ENCODE measurements at regions of chr2 and their contacts with region 1.

Region 1: GRCh38 chr2:42663106-42663780 is 94.8 kb downstream of the MTA3 start:
- DNase-seq: peak; percentile 70
- CTCF ChIP-seq: peak; percentile 95

Region 2: DNA sequence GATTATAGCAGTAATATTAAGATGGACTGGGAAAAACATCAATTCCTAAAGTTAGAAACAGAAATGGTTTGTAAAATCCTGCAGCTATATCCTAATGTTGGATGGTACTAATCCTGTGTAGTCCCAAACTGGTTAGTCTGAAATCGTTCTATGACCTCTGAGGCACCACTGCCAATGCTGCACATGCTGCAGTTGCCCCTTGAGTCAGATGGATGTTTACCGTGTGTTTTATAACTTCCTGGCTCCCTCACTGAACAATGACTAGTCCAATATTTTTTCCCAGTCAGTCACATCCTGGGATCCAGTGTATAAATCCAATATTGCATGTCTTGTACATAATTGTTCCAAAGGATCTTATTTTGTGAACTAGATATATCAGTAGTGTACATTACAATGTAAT is 842.1 kb before region 1 on chr2:
- in situ Hi-C with region 1: no loop called
- DNase-seq: no peak
- CTCF ChIP-seq: no peak

Region 3: GRCh38 chr2:41853427-41854216 is 809.6 kb before region 1 on chr2:
- in situ Hi-C with region 1: no loop called
- DNase-seq: peak; percentile 23
- CTCF ChIP-seq: peak; percentile 45

Region 4: DNA sequence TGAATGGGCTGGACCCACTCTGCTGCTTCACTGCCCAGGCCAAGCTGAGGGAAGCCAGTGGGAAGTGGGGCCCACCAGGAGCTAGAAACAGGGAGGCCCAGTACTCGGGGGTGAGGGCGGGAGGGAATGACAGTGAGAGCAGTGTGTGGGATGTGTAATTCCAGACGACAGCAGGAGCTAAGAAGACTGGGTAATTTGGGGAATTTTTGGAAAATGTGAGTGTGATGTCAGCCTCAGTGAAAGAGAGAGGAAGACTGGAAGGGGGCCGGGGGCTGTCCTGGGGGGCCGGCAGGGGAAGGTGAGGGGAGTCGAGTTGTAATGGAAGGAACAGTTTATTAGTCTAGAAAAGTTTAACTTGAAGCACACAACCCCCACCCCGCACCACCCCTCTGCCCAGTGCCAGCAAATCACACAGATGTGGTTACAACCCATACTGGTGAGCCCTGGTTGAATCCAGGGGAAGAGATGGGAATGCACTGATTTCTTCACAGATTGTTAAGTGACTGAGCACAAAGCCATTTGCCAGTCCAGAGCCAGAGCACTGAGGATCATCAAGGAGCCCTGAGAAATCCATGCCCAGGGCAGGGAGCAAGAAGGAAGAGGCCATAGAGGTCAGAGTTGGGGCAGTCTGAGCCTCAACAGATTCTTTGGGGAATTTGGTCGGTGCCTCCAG is 692.1 kb before region 1 on chr2:
- in situ Hi-C with region 1: no loop called
- DNase-seq: no peak
- CTCF ChIP-seq: no peak

Region 5: GRCh38 chr2:42486145-42486906 is 176.9 kb before region 1 on chr2:
- in situ Hi-C with region 1: loop called (anchors 10 kb)
- DNase-seq: no peak
- CTCF ChIP-seq: no peak

Region 6: DNA sequence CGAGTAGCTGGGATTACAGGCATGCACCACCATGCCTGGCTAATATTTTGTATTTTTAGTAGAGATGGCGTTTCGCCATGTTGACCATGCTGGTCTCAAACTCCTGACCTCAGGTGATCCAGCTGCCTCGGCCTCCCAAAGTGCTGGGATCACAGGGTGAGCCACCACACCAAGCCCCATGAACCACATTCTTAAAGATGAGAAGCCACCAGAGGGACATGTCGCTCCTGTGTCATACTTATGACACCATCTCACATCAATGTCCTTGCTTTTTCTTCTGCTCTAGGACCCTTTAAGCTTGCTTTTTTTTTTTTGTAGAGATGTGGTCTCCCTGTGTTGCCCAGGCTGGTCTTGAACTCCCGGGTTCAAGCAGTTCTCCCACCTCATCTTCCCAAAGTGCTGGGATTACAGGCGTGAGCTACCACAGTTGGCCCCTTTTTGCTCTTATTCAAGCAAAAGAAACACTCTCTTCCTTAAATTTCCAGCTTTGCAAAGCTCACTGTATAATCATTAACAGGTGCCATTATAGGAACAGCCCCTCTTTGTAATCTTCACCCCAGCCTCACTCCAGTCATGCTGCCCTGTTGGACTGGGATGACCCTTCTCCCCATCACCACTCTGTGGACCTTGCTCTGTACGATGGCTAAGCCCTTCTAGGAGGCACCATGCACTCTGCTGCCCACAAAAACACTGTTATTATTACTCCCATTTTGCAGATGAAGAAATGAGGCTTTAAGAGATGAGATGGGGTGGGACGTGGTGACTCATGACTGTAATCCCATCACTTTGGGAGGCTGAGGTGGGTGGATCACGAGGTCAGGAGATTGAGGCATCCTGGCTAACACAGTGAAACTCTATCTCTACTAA is 158.6 kb before region 1 on chr2:
- in situ Hi-C with region 1: loop called (anchors 5 kb)
- DNase-seq: no peak
- CTCF ChIP-seq: no peak

Measured in GM13976 (cell line).